ENCODE measurements at regions of chr10 and their contacts with region 1.

Region 1: GRCh38 chr10:76882245-76882644 is 755.4 kb downstream of the KCNMA1 start:
- DNase-seq: no peak
- ATAC-seq: peak in 1 of 4 donors; percentile 37
- H3K4me3 ChIP-seq: no peak overlapping the region
- H3K27ac ChIP-seq: no peak overlapping the region
- H3K4me1 ChIP-seq: peaks cover 0 to 45% (median 9%) of the 10 kb centered on the region in 12 donors
- H3K27me3 ChIP-seq: peaks cover 0 to 5% (median 0%) of the 10 kb centered on the region in 9 donors
- CTCF ChIP-seq: no peak
- POLR2A ChIP-seq: no peak

Region 2: DNA sequence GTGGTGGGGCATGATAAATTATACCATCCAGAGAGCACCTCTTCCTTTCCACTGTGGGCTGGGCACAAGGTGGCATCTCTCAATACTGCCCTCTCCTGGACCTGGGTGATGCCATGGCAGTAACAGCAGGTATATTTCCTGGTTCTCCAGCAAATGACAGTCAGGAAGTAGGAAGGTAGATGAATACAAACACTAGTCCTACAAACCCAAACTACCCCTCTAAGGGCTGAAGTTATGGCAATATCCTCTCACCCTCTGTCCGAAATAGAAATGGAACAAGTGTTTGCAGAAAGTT is 249.5 kb before region 1 on chr10:
- intact Hi-C with region 1: loop called in 2 of 10 experiments (anchors 5 to 10 kb)
- DNase-seq: no peak
- ATAC-seq: peak; percentile 41 to 70 (median 56)
- H3K4me3 ChIP-seq: no peak overlapping the region
- H3K27ac ChIP-seq: no peak overlapping the region
- H3K4me1 ChIP-seq: peaks cover 0 to 16% (median 0%) of the 10 kb centered on the region in 12 donors
- H3K27me3 ChIP-seq: no peaks in the 10 kb centered on the region
- CTCF ChIP-seq: peak in 7 of 12 donors; percentile 7 to 30 (median 29)
- POLR2A ChIP-seq: no peak

Region 3: GRCh38 chr10:76942628-76943416 is 60.6 kb after region 1 on chr10:
- intact Hi-C with region 1: no loop called
- DNase-seq: no peak
- ATAC-seq: no peak
- H3K4me3 ChIP-seq: no peak overlapping the region
- H3K27ac ChIP-seq: peak overlapping the region in 1 of 12 donors; percentile 50
- H3K4me1 ChIP-seq: peaks cover 0 to 13% (median 0%) of the 10 kb centered on the region in 12 donors
- H3K27me3 ChIP-seq: no peaks in the 10 kb centered on the region
- CTCF ChIP-seq: no peak
- POLR2A ChIP-seq: no peak

Measured in heart left ventricle (tissue), 16 donors.